Heart right ventricle (tissue), 16 donors: ENCODE measurements at regions of chr9 and their contacts with region 1.

Region 1: GRCh38 chr9:121286973-121287741 is 19.2 kb downstream of the GSN start:
- DNase-seq: peak; percentile 76 to 90
- ATAC-seq: peak; percentile 73 to 85 (median 79)
- H3K4me3 ChIP-seq: peak overlapping the region in 9 of 10 donors; percentile 10 to 42 (median 31)
- H3K27ac ChIP-seq: peak overlapping the region; percentile 93 to 100 (median 98)
- H3K4me1 ChIP-seq: peaks cover 63 to 100% (median 91%) of the 10 kb centered on the region in 9 donors
- H3K27me3 ChIP-seq: no peaks in the 10 kb centered on the region
- CTCF ChIP-seq: peak in 8 of 9 donors; percentile 21 to 69 (median 47)

Region 2: GRCh38 chr9:121299467-121300234 is 12.5 kb after region 1 on chr9:
- intact Hi-C with region 1: loop called in 4 of 10 experiments (anchors 1 to 2 kb)
- DNase-seq: peak; percentile 89 to 91
- ATAC-seq: peak; percentile 76 to 83 (median 79)
- H3K4me3 ChIP-seq: peak overlapping the region; percentile 56 to 81 (median 68)
- H3K27ac ChIP-seq: peak overlapping the region; percentile 82 to 100 (median 94)
- H3K4me1 ChIP-seq: peaks cover 38 to 96% (median 93%) of the 10 kb centered on the region in 9 donors
- H3K27me3 ChIP-seq: no peaks in the 10 kb centered on the region
- CTCF ChIP-seq: peak in 2 of 9 donors; percentile 10 to 22

Region 3: GRCh38 chr9:121326130-121326838 is 39.1 kb after region 1 on chr9:
- intact Hi-C with region 1: loop called in 3 of 10 experiments (anchors 2 to 5 kb)
- DNase-seq: peak; percentile 86 to 94
- ATAC-seq: peak; percentile 90 to 95 (median 92)
- H3K4me3 ChIP-seq: peak overlapping the region in 3 of 10 donors; percentile 2 to 31 (median 24)
- H3K27ac ChIP-seq: peak overlapping the region; percentile 85 to 98 (median 92)
- H3K4me1 ChIP-seq: peaks cover 32 to 96% (median 53%) of the 10 kb centered on the region in 9 donors
- H3K27me3 ChIP-seq: no peaks in the 10 kb centered on the region
- CTCF ChIP-seq: no peak